IMR-90 (cell line): ENCODE measurements at regions of chr6 and their contacts with region 1.

Region 1: DNA sequence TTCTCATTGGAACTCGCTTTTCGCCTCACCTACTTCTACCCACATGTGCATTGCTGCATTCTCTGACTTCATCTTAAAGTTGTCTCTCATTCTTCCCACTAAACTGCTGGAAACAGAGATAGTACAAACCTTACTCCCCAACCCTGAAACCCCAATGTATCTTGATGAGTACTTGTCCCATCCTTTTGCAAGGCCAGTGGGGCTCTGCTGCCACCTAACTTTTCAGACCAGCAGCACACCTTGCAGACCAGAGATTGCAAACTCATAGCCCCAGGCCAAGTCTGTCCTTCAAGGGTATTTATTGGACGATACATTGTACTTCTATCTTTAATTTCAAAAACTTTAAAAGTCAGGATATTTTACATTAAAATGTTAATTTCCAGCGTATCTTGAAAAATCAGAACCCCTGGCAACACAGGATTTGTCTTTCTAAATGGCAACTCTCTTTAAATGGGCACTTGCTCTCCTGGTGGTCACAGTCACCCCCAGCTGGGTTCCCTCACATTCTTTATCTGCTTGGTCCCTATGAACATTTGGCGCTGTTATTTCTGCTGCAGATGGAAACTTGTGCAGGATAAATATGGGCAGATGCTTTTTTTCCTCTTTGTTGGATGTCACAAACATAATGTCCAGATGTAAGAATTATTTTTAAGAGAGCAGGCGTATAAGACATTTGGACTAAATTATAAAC is 83.9 kb downstream of the SOD2 start:
- DNase-seq: peak; percentile 28
- ATAC-seq: 0 out of 2 replicates have a peak, but pooled peaks have one; percentile 46
- H3K4me3 ChIP-seq: no peak overlapping the region
- H3K27ac ChIP-seq: no peak overlapping the region
- H3K4me1 ChIP-seq: no peaks in the 10 kb centered on the region
- H3K27me3 ChIP-seq: 0 out of 2 replicates have a peak, but pooled peaks cover 2% of the 10 kb centered on the region
- CTCF ChIP-seq: peak; percentile 46
- POLR2A ChIP-seq: no peak
- RAD21 ChIP-seq: peak; percentile 65

Region 2: DNA sequence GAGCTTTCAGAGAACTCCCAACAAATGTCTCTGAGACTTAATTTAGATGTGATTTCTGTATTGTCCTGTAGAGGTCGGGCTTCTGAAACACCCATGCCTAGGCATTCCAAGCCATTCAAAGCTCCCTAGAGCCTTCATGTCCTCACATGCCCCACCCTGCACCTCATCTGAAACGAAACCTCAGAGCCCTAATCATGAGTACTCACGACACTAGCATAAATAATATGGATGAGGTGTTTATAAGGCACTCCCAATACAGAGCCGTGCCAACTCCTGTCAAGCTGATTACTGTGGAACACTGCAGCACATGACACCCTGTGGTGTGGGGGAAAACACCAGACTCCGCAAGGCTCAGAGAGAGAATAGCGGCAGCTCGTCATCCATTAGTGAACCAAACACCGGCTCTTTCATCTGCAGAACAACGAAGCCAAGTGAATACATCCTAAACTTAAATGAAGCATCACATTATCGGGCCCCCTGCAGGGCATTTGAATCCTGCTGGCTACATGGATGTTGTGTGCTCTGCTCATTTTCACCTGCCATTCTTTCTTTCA is 356.1 kb before region 1 on chr6:
- CTCF ChIA-PET with region 1: no interaction called
- POLR2A ChIA-PET with region 1: no interaction called
- dilution Hi-C with region 1: no loop called
- in situ Hi-C with region 1: no loop called
- intact Hi-C with region 1: loop called (anchors 2 kb)
- DNase-seq: peak; percentile 45
- ATAC-seq: peak; percentile 94
- H3K4me3 ChIP-seq: no peak overlapping the region
- H3K27ac ChIP-seq: no peak overlapping the region
- H3K4me1 ChIP-seq: no peaks in the 10 kb centered on the region
- H3K27me3 ChIP-seq: no peaks in the 10 kb centered on the region
- CTCF ChIP-seq: peak; percentile 51
- POLR2A ChIP-seq: no peak
- RAD21 ChIP-seq: peak; percentile 27; the same call in 1 of the 2 replicates

Region 3: GRCh38 chr6:159640322-159640721 is 31.2 kb after region 1 on chr6:
- CTCF ChIA-PET with region 1: no interaction called
- POLR2A ChIA-PET with region 1: no interaction called
- dilution Hi-C with region 1: no loop called
- in situ Hi-C with region 1: no loop called
- intact Hi-C with region 1: no loop called
- DNase-seq: no peak
- ATAC-seq: no peak
- H3K4me3 ChIP-seq: no peak overlapping the region
- H3K27ac ChIP-seq: no peak overlapping the region
- H3K4me1 ChIP-seq: peaks cover 2% of the 10 kb centered on the region; the same call in 1 of the 2 replicates
- H3K27me3 ChIP-seq: no peaks in the 10 kb centered on the region
- CTCF ChIP-seq: no peak
- POLR2A ChIP-seq: no peak
- RAD21 ChIP-seq: no peak